GM10248 (cell line): ENCODE measurements at regions of chr5 and their contacts with region 1.

Region 1: GRCh38 chr5:82165740-82166530 is 112.2 kb downstream of the RPS23 start:
- DNase-seq: peak; percentile 29
- CTCF ChIP-seq: peak; percentile 81

Region 2: GRCh38 chr5:81425569-81425968 is 740.4 kb before region 1 on chr5:
- CTCF ChIA-PET with region 1: interaction called, 10 read pairs
- POLR2A ChIA-PET with region 1: no interaction called
- DNase-seq: peak; percentile 23
- CTCF ChIP-seq: peak; percentile 40

Region 3: GRCh38 chr5:81856948-81857928 is 308.7 kb before region 1 on chr5:
- CTCF ChIA-PET with region 1: interaction called, 12 read pairs
- POLR2A ChIA-PET with region 1: no interaction called
- DNase-seq: no peak
- CTCF ChIP-seq: peak; percentile 38

Region 4: DNA sequence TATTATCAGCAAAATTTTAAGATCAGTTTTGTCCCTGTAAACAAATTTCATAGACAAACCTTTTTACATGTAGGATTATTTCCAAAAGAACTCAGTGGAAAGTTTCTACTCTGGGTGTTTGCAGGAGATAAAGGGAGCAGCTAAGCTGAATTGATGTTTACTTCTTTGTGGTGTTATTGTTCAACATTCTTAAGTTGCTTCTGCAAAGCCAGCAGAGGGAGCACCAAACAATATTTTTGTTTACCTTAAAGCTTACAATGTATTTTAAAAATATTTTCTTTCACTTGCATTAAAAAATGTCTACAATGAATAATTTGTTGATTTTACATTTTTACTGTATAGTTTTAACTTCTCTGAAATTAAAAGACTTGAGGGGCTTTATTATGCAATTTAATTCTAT is 58.7 kb before region 1 on chr5:
- CTCF ChIA-PET with region 1: interaction called, 24 read pairs
- POLR2A ChIA-PET with region 1: no interaction called
- DNase-seq: no peak
- CTCF ChIP-seq: peak; percentile 45

Region 5: GRCh38 chr5:82225525-82226172 is 59.7 kb after region 1 on chr5:
- CTCF ChIA-PET with region 1: interaction called, 10 read pairs
- POLR2A ChIA-PET with region 1: no interaction called
- DNase-seq: peak; percentile 57
- CTCF ChIP-seq: peak; percentile 69